GM18951 (cell line): ENCODE measurements at regions of chr11 and their contacts with region 1.

Region 1: GRCh38 chr11:46438211-46438610 is 46.6 kb upstream of the CHRM4 start:
- POLR2A ChIP-seq: no peak

Region 2: GRCh38 chr11:46252373-46252914 is 185.8 kb before region 1 on chr11:
- in situ Hi-C with region 1: no loop called
- POLR2A ChIP-seq: no peak

Region 3: GRCh38 chr11:46710821-46711269 is 272.6 kb after region 1 on chr11:
- in situ Hi-C with region 1: loop called (anchors 10 kb)
- POLR2A ChIP-seq: no peak